Activated T-helper 2 cell treated with anti-CD3 and anti-CD28 coated beads, Interferon-gamma antibody, Interleukin-2, Interleukin-4, amounts not matched to agents 10 μg/mL and 5 μg/mL and 100 μg/mL, durations not matched to agents 14 hours and 24 hours and 36 hours (primary cell): ENCODE measurements at regions of chr9 and their contacts with region 1.

Region 1: DNA sequence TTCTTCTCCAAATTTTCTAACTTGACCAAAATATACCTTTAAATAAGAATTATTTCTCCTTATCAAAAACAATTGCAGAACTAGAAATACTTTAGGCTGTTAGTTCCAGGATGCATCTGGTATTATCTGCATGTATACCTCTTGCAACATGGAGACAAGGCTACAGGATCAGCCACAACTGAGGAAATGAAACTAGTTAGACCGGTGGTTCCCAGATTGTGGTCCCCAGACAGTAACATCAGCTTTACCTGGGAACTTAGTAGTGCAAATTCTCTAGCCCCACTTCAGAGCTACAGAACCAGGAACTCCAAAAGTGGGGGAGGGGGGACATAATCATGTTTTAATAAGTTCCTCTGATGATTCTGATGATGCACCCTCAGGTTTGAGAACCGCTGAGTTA is 61.6 kb upstream of the C9orf72 start:
- DNase-seq: no peak
- H3K4me3 Mint-ChIP-seq: no peak overlapping the region
- H3K27ac Mint-ChIP-seq: no peak overlapping the region
- H3K4me1 Mint-ChIP-seq: no peaks in the 10 kb centered on the region
- H3K27me3 Mint-ChIP-seq: peaks cover 5% of the 10 kb centered on the region

Region 2: GRCh38 chr9:27688954-27689353 is 54.1 kb after region 1 on chr9:
- intact Hi-C with region 1: loop called (anchors 10 kb)
- DNase-seq: no peak
- H3K4me3 Mint-ChIP-seq: no peak overlapping the region
- H3K27ac Mint-ChIP-seq: no peak overlapping the region
- H3K4me1 Mint-ChIP-seq: peaks cover 2% of the 10 kb centered on the region
- H3K27me3 Mint-ChIP-seq: peaks cover 1% of the 10 kb centered on the region